Naive thymus-derived CD4-positive, alpha-beta T cell (primary cell): ENCODE measurements at regions of chr12 and their contacts with region 1.

Region 1: DNA sequence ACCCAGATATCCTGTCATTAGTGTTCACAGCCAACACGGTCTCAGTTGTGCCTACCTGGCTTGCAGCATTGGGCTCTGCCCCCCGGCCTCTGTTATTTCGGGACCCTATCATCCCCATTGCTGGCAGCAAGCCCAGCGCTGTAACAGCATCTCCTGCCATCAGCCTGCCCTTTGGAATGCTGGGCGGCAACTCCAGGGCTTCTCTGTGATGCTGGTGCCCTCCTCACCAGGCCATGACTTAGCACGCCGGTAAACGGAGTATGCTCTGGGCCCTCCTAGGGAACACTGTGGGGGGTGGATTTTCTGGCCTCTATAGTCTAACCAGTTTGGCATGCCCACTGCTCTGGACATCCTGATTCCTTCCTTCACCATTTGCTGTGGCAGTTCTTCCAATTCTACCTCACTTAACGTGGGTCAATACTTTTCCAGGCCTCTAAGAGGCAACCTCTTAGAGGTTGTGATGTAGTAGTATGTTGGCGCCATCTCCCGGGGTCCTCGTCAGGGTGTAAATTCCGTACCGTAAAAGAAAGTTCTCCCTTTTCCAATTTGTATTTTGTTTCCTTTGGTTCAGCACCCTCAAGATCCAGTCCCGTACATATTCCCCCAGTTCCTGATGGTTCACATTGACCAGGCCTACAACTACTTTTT is 80.0 kb downstream of the SINHCAF start:
- DNase-seq: no peak
- ATAC-seq: no peak
- H3K4me3 ChIP-seq: no peak overlapping the region
- H3K4me3 Mint-ChIP-seq: no peak overlapping the region
- H3K27ac ChIP-seq: no peak overlapping the region
- H3K27ac Mint-ChIP-seq: peak overlapping the region in 1 of 9 donors; percentile 1
- H3K4me1 ChIP-seq: no peaks in the 10 kb centered on the region
- H3K4me1 Mint-ChIP-seq: no peaks in the 10 kb centered on the region
- H3K27me3 ChIP-seq: no peaks in the 10 kb centered on the region
- H3K27me3 Mint-ChIP-seq: peaks cover 0 to 4% (median 2%) of the 10 kb centered on the region in 5 donors

Region 2: GRCh38 chr12:31274520-31275300 is 28.8 kb after region 1 on chr12:
- CTCF ChIA-PET with region 1: interaction called, 13 read pairs
- POLR2A ChIA-PET with region 1: no interaction called
- intact Hi-C with region 1: no loop called
- DNase-seq: no peak
- ATAC-seq: no peak
- H3K4me3 ChIP-seq: no peak overlapping the region
- H3K4me3 Mint-ChIP-seq: no peak overlapping the region
- H3K27ac ChIP-seq: no peak overlapping the region
- H3K27ac Mint-ChIP-seq: peak overlapping the region in 5 of 9 donors; percentile 25 to 88 (median 51)
- H3K4me1 ChIP-seq: no peaks in the 10 kb centered on the region
- H3K4me1 Mint-ChIP-seq: peaks cover 0 to 7% (median 0%) of the 10 kb centered on the region in 7 donors
- H3K27me3 ChIP-seq: no peaks in the 10 kb centered on the region
- H3K27me3 Mint-ChIP-seq: no peaks in the 10 kb centered on the region

Region 3: GRCh38 chr12:31315089-31315715 is 69.3 kb after region 1 on chr12:
- CTCF ChIA-PET with region 1: no interaction called
- POLR2A ChIA-PET with region 1: no interaction called
- intact Hi-C with region 1: no loop called
- DNase-seq: no peak
- ATAC-seq: no peak
- H3K4me3 ChIP-seq: no peak overlapping the region
- H3K4me3 Mint-ChIP-seq: peak overlapping the region in 3 of 10 donors; percentile 21 to 32 (median 30)
- H3K27ac ChIP-seq: no peak overlapping the region
- H3K27ac Mint-ChIP-seq: peak overlapping the region in 6 of 9 donors; percentile 11 to 80 (median 42)
- H3K4me1 ChIP-seq: peaks cover 19 to 36% of the 10 kb centered on the region in 2 donors
- H3K4me1 Mint-ChIP-seq: peaks cover 46 to 88% (median 72%) of the 10 kb centered on the region in 7 donors
- H3K27me3 ChIP-seq: no peaks in the 10 kb centered on the region
- H3K27me3 Mint-ChIP-seq: no peaks in the 10 kb centered on the region

Region 4: DNA sequence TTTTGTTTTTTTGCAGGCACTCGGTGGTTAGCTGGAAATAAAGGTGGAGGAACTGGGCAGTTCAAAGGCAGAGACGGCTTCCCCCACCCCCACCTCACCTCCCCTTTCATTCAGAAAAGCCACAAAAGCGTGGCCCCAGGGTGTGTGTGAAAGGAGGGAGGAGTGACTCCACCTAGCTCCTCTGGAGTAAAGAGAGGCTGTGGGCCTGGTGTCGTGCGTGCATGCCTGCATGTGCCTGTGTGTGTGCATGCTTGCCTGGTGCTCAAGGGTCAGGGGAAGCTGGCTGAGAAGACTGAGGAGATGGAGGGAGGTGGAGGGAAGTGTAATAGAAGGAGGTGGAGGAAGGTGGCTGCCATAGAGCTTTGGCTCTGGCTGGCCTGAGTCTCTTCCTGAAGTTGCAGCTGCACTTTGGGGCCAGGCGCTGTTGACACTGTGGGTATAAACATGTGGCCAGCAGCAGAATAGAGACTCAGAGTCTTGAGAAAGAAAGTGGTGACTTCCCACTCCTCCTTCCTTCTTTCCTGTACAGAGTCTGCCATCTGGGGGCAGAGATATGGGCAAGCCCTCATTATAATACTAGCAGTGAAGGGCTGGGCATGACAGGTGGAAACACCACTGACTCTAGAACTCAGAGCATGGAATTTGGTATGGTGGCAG is 116.9 kb after region 1 on chr12:
- CTCF ChIA-PET with region 1: no interaction called
- POLR2A ChIA-PET with region 1: no interaction called
- intact Hi-C with region 1: loop called in 1 of 2 experiments (anchors 1 kb)
- DNase-seq: peak in 5 of 9 donors; percentile 4 to 34 (median 17)
- ATAC-seq: peak; percentile 78
- H3K4me3 ChIP-seq: peak overlapping the region; percentile 8
- H3K4me3 Mint-ChIP-seq: peak overlapping the region; percentile 50 to 81 (median 74)
- H3K27ac ChIP-seq: no peak overlapping the region
- H3K27ac Mint-ChIP-seq: peak overlapping the region; percentile 12 to 91 (median 56)
- H3K4me1 ChIP-seq: peaks cover 4 to 11% of the 10 kb centered on the region in 2 donors
- H3K4me1 Mint-ChIP-seq: peaks cover 12 to 27% (median 18%) of the 10 kb centered on the region in 7 donors
- H3K27me3 ChIP-seq: no peaks in the 10 kb centered on the region
- H3K27me3 Mint-ChIP-seq: no peaks in the 10 kb centered on the region

Region 5: GRCh38 chr12:31631784-31632183 is 385.8 kb after region 1 on chr12:
- CTCF ChIA-PET with region 1: interaction called, 3 read pairs
- POLR2A ChIA-PET with region 1: no interaction called
- intact Hi-C with region 1: loop called in 1 of 2 experiments (anchors 1 kb)
- DNase-seq: no peak
- ATAC-seq: no peak
- H3K4me3 ChIP-seq: no peak overlapping the region
- H3K4me3 Mint-ChIP-seq: no peak overlapping the region
- H3K27ac ChIP-seq: no peak overlapping the region
- H3K27ac Mint-ChIP-seq: no peak overlapping the region
- H3K4me1 ChIP-seq: no peaks in the 10 kb centered on the region
- H3K4me1 Mint-ChIP-seq: peaks cover 0 to 7% (median 7%) of the 10 kb centered on the region in 7 donors
- H3K27me3 ChIP-seq: no peaks in the 10 kb centered on the region
- H3K27me3 Mint-ChIP-seq: peaks cover 0 to 7% (median 0%) of the 10 kb centered on the region in 5 donors

Region 6: DNA sequence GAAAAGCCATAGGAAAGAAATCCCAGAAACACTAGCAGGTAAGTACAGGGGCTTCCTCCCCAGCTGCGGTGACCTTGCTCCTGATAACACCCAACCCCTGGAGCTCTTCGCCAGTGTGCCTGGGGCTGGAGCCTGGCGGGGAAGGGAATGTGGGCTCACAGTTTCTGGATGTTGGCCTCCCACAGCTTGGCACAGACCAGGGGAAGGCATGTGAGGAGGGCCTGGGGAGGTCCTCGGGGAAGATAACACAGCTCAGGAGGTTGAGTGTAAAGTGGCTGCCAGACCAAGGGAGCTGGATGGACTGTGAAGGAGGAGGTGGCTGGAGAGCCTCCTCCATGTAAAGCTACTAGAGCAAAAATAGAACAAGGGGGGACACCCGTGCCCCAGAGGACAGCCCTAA is 980.8 kb after region 1 on chr12:
- CTCF ChIA-PET with region 1: no interaction called
- POLR2A ChIA-PET with region 1: no interaction called
- intact Hi-C with region 1: no loop called
- DNase-seq: no peak
- ATAC-seq: no peak
- H3K4me3 ChIP-seq: no peak overlapping the region
- H3K4me3 Mint-ChIP-seq: no peak overlapping the region
- H3K27ac ChIP-seq: no peak overlapping the region
- H3K27ac Mint-ChIP-seq: no peak overlapping the region
- H3K4me1 ChIP-seq: no peaks in the 10 kb centered on the region
- H3K4me1 Mint-ChIP-seq: peaks cover 0 to 2% (median 0%) of the 10 kb centered on the region in 7 donors
- H3K27me3 ChIP-seq: no peaks in the 10 kb centered on the region
- H3K27me3 Mint-ChIP-seq: no peaks in the 10 kb centered on the region